HEK293 (cell line): ENCODE measurements at regions of chr1 and their contacts with region 1.

Region 1: GRCh38 chr1:3012456-3013291 is 8.6 kb upstream of the ACTRT2 start:
- H3K4me3 ChIP-seq: no peak overlapping the region
- H3K27ac ChIP-seq: no peak overlapping the region
- H3K4me1 ChIP-seq: no peaks in the 10 kb centered on the region
- CTCF ChIP-seq: peak; percentile 35; the same call in 1 of the 2 replicates

Region 2: DNA sequence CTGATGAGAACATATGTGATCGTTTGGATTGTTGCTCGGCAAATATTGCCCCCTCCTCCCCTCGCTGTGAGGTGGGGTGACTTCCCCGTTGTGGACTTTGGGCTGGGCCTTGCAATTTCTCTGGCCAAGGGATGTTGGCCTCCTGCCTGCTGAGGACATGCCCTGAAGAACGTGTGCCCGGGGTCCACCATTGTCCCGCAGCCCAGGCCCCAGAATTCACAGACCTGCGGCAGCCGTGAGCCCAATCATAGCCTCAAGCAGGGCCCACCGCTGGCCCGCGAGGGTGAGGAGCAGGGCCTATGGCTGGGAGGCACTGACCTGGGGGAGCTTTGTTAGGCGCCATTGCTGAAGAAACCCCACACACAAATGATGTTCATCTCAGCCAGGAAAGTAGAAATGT is 49.7 kb before region 1 on chr1:
- CTCF ChIA-PET with region 1: no interaction called
- POLR2A ChIA-PET with region 1: no interaction called
- H3K4me3 ChIP-seq: no peak overlapping the region
- H3K27ac ChIP-seq: no peak overlapping the region
- H3K4me1 ChIP-seq: no peaks in the 10 kb centered on the region
- CTCF ChIP-seq: no peak

Region 3: DNA sequence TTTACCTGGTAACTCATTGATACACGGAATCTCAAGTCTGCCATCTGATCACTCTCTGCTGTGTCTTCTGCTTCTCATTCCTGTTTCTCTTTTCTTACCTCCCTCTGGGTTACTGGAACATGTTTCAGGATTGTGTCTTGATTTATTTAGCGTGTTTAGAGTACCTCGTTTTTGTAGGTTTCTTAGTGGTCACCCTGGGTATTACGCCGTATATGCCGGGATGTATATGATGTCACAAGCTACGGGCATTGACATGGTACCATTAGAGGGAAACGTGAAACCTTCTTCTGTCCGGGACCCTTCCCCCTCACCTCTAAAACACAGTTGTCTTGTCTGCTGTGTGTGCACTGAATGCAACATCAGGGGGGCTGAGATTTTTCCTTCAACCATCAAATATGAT is 11.3 kb after region 1 on chr1:
- CTCF ChIA-PET with region 1: interaction called, 10 read pairs
- POLR2A ChIA-PET with region 1: no interaction called
- H3K4me3 ChIP-seq: no peak overlapping the region
- H3K27ac ChIP-seq: no peak overlapping the region
- H3K4me1 ChIP-seq: no peaks in the 10 kb centered on the region
- CTCF ChIP-seq: no peak

Region 4: DNA sequence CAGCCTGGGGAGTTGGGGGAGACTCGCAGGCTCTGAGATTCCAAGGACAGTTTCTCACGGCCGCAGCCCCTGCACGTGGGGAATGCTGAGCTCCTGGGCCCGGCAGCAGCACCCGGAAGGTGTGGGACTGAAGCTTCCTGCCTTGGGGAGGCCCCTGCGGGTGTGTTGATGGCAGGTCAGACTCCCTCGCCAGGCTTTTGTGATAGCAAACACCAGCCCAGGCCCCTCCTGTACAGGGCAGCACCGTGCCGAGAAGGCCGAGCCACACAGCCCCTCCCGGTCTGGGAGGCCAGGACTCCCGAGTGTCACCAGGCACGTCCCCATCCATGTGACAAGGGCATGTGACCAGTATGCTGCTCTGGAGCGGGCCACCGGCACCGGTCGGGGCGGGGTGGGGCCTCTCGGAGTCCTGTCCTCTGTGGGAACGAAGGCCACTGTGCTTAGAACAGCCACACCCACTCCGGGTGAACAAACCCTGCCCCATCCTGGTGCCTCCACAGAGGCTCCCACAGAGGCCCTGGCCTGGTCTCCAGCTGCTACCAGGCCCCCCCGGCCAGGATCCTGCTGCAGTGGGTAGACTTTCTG is 410.7 kb after region 1 on chr1:
- CTCF ChIA-PET with region 1: interaction called, 22 read pairs
- POLR2A ChIA-PET with region 1: no interaction called
- H3K4me3 ChIP-seq: no peak overlapping the region
- H3K27ac ChIP-seq: no peak overlapping the region
- H3K4me1 ChIP-seq: peaks cover 20% of the 10 kb centered on the region
- CTCF ChIP-seq: no peak